ENCODE measurements at regions of chr15 and their contacts with region 1.

Region 1: GRCh38 chr15:53962332-53963241 is 15.7 kb upstream of the UNC13C start:
- DNase-seq: no peak
- ATAC-seq: no peak
- H3K4me3 ChIP-seq: no peak overlapping the region
- H3K27ac ChIP-seq: no peak overlapping the region
- H3K4me1 ChIP-seq: no peaks in the 10 kb centered on the region
- H3K27me3 ChIP-seq: no peaks in the 10 kb centered on the region
- CTCF ChIP-seq: peak in 3 of 5 experiments; percentile 32 to 48 (median 44)
- POLR2A ChIP-seq: no peak

Region 2: DNA sequence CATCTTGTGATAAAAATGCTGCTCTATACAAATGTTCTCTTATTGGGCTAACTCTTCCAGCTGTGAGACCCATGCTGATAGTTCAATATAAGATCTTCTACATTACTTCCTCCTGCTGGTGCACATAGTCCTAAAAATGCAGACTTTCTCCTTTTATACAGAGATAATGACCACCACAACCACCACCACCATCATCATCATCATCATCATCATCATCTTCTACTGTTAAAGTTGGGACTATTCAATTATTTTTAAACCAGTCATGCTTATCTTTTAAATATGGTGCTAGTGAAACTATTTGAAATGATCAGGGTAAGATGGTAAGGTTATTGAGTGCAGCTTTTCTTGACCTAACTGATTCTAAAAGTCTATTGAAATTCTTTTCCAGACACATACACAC is 64.6 kb before region 1 on chr15:
- in situ Hi-C with region 1: no loop called
- intact Hi-C with region 1: no loop called
- DNase-seq: no peak
- ATAC-seq: no peak
- H3K4me3 ChIP-seq: no peak overlapping the region
- H3K27ac ChIP-seq: no peak overlapping the region
- H3K4me1 ChIP-seq: no peaks in the 10 kb centered on the region
- H3K27me3 ChIP-seq: no peaks in the 10 kb centered on the region
- CTCF ChIP-seq: no peak
- POLR2A ChIP-seq: no peak

Region 3: DNA sequence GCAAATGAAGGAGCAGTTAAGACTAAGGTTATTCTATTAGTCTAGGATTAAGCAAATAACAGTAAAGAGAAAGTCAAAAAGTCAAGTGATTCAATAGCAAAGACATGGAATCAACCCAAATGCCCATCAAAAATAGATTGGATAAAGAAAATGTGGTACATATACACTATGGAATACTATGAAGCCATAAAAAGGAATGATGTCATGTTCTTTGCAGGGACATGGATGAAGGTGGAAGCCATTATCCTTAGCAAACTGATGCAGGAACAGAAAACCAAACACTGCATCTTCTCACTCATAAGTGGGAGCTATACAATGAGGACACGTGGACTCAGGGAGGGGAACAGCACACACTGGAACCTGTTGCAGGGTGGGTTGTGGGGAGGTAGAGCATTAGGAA is 44.7 kb after region 1 on chr15:
- in situ Hi-C with region 1: no loop called
- intact Hi-C with region 1: no loop called
- DNase-seq: no peak
- ATAC-seq: no peak
- H3K4me3 ChIP-seq: no peak overlapping the region
- H3K27ac ChIP-seq: no peak overlapping the region
- H3K4me1 ChIP-seq: no peaks in the 10 kb centered on the region
- H3K27me3 ChIP-seq: no peaks in the 10 kb centered on the region
- CTCF ChIP-seq: no peak
- POLR2A ChIP-seq: no peak

Region 4: DNA sequence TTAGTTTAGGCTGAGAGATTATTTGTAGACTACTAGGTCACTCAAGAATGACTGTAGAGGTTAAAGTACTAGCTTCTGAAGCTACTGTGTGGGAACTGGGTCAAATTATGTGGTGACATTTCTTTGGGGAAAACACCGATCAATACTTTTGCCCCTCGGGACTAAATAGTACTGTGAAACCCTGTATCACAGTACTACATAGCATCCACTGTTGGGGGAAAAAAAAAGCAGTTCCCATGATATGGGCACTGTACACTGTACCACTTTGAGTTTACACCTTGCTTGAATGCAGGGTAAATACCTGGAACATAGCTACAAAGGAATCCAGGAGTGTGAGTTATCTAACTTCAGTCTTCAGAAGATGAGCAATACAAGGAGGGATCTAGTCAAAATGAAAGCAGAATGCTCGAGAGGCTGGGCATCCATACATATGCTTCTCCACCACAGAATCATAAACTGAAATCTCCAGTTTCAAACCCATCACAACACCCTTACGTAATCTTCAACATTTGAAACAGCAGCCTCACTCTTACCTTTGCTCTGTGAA is 327.1 kb after region 1 on chr15:
- in situ Hi-C with region 1: no loop called
- intact Hi-C with region 1: loop called (anchors 10 kb)
- DNase-seq: no peak
- ATAC-seq: no peak
- H3K4me3 ChIP-seq: no peak overlapping the region
- H3K27ac ChIP-seq: no peak overlapping the region
- H3K4me1 ChIP-seq: no peaks in the 10 kb centered on the region
- H3K27me3 ChIP-seq: no peaks in the 10 kb centered on the region
- CTCF ChIP-seq: no peak
- POLR2A ChIP-seq: no peak

Region 5: DNA sequence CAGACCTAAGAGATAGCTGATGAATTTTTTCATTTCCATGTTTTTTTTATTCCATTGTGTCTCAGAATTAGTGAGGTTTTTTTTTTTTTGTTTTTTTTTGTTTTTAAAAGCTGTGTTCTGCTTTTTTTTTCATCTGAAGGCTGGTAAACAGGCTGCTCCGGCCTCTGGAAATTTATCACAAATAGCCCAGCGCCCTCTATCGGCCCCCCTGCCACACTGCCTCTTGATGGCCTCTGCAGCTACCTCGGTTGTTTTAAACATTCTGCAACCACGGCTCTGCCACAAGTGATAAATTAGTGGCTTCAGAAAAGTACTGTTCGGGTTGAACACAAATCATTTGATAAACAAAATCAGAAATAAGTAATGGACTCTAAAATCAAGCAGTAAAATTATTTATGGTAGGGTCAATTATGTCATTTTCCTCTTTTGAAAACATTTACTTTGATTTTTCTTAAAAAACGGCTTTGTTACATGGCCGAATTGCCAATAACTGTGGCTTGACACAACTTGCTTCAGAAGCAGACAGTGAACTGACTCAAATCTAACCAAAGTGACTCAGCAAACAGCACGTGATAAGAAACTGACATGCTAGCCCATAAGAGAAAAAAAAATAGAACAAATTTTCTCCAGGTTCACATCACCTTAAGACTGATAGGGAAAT is 1146.4 kb after region 1 on chr15:
- in situ Hi-C with region 1: no loop called
- intact Hi-C with region 1: loop called (anchors 5 kb)
- DNase-seq: peak; percentile 20 to 52
- ATAC-seq: peak in 1 of 2 donors; percentile 60
- H3K4me3 ChIP-seq: no peak overlapping the region
- H3K27ac ChIP-seq: no peak overlapping the region
- H3K4me1 ChIP-seq: peaks cover 0 to 3% of the 10 kb centered on the region in 2 donors
- H3K27me3 ChIP-seq: no peaks in the 10 kb centered on the region
- CTCF ChIP-seq: peak; percentile 39 to 61 (median 47)
- POLR2A ChIP-seq: no peak

Measured in gastrocnemius medialis (tissue), 4 donors.